Activated CD4-positive, alpha-beta T cell treated with anti-CD3 and anti-CD28 coated beads for 36 hours (primary cell): ENCODE measurements at regions of chr5 and their contacts with region 1.

Region 1: DNA sequence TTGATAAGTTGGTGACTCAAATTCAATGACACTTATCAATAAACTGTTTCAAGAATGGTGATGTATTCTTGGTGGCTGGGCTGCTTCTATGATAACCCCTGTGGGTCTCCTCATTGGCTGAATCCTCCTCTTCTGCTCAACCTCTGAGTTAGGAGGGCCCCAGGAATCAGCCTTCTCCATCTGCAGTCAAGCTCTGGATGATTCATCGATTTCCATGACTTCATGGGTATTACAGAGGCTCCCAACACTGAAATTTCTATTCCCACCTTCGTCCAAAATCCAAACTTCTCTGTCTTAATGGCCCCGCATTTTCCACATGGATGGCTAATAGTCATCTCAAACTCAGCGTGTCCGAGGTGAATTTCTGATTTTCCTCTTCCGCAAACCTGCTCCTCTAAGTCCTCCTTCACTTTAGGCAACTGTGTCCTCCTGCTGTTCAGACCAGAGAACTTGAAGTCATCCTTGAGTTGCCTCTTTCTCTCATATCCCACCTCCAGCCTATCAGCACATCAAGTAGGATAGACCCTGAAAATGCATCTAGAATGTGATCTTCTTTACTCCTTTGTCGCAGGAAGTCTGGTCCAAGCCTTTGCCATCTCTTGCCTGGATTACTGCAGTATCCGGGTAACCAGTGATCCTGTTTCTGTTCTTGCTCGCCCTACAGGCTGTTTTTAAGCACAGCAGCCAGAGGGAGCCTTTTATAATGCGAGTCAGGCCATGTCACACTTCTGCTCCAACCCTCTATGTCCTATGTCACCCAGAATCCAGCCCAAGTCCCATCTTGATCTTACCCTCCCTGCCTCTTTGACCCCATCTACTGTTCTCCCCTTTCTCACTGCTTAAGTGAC is 41.4 kb upstream of the IL7R start:
- DNase-seq: peak; percentile 72
- ATAC-seq: peak; percentile 41
- H3K4me3 Mint-ChIP-seq: no peak overlapping the region
- H3K27ac Mint-ChIP-seq: no peak overlapping the region
- H3K4me1 Mint-ChIP-seq: peaks cover 56% of the 10 kb centered on the region
- H3K27me3 Mint-ChIP-seq: no peaks in the 10 kb centered on the region

Region 2: GRCh38 chr5:35617435-35618303 is 197.6 kb before region 1 on chr5 and contains the start of gene SPEF2:
- CTCF ChIA-PET with region 1: no interaction called
- POLR2A ChIA-PET with region 1: no interaction called
- intact Hi-C with region 1: loop called in 1 of 2 experiments (anchors 5 kb)
- DNase-seq: peak; percentile 91
- ATAC-seq: peak; percentile 92
- H3K4me3 Mint-ChIP-seq: peak within 1 kb of the TSS; percentile 83
- H3K27ac Mint-ChIP-seq: peak within 1 kb of the TSS; percentile 99
- H3K4me1 Mint-ChIP-seq: peaks cover 31% of the 10 kb centered on the region
- H3K27me3 Mint-ChIP-seq: no peaks in the 10 kb centered on the region
- total RNA-seq, gene SPEF2: 14.1 to 14.6 TPM

Region 3: GRCh38 chr5:35777358-35778087 is 37.8 kb before region 1 on chr5:
- CTCF ChIA-PET with region 1: interaction called, 35 read pairs
- POLR2A ChIA-PET with region 1: no interaction called
- intact Hi-C with region 1: loop called (anchors 1 to 2 kb)
- DNase-seq: peak; percentile 86
- ATAC-seq: peak; percentile 33
- H3K4me3 Mint-ChIP-seq: peak overlapping the region; percentile 17
- H3K27ac Mint-ChIP-seq: peak overlapping the region; percentile 79
- H3K4me1 Mint-ChIP-seq: peaks cover 84% of the 10 kb centered on the region
- H3K27me3 Mint-ChIP-seq: no peaks in the 10 kb centered on the region

Region 4: DNA sequence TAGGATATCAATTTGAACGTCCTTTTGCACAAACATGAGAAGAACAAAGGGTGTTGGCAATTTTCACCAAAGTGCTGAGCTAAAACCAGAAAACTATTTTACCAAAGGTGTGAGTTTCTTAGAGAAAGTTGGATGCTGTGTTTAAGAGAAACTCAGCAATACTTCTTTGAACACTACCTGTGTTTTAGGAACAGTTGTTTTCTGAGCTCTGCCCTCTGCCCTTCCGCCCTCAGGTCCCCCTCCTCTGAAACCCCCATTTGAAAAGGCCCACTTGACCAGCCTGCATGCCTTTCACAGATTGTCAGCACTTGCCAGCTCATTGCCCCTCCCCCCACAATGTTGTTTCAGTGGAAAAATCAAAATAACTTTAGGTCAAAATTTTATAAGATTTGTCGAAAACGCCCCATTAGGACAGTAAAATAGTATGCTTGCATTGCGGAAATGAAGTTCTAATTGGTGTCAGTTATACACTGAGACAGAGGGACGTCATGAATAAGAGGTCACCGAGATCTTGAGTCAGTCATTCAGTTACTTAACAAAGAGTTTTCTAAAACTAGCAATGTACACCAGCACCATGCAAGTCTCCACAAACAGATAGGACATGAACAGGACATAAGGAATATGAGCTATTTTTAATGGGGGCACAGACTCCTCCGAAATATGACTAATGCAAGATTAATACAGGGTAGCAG is 20.5 kb before region 1 on chr5:
- CTCF ChIA-PET with region 1: interaction called, 16 read pairs
- POLR2A ChIA-PET with region 1: interaction called, 7 read pairs
- intact Hi-C with region 1: loop called (anchors 1 kb)
- DNase-seq: peak; percentile 45
- ATAC-seq: peak; percentile 40
- H3K4me3 Mint-ChIP-seq: peak overlapping the region; percentile 25
- H3K27ac Mint-ChIP-seq: peak overlapping the region; percentile 91
- H3K4me1 Mint-ChIP-seq: peaks cover 90% of the 10 kb centered on the region
- H3K27me3 Mint-ChIP-seq: no peaks in the 10 kb centered on the region

Region 5: DNA sequence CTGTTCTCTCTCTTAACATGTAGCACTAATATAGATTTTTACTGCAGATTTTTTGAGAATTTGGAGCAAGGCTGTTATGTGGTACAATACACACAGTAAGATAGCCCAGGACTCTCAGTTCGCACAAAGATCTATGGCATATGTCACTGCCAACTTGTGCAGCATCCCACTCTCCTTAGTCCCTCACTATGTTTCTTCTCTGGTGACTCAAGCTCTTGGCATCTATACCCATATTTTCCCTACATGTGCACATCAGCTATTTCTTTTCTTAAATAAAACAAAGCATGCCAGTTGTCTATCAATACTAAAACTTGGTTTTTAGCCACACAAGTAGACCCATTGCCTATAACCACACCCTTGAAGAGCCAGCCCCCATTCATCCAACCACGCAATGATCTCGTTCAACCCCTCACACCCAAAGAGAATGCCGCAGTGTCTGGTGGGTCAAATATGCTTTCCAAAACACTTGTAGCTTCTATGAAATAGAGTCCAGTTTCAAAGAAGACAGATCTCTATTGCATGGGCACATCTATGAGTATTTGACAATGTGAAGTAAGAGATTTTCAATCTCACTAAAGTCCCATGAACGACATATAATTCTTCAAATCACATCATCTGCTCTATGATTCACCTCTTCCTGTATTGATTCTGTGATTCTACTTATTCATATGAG is 23.2 kb after region 1 on chr5:
- CTCF ChIA-PET with region 1: interaction called, 9 read pairs
- POLR2A ChIA-PET with region 1: interaction called, 4 read pairs
- intact Hi-C with region 1: loop called (anchors 1 kb)
- DNase-seq: peak; percentile 69
- ATAC-seq: peak; percentile 65
- H3K4me3 Mint-ChIP-seq: peak overlapping the region; percentile 61
- H3K27ac Mint-ChIP-seq: peak overlapping the region; percentile 99
- H3K4me1 Mint-ChIP-seq: peaks cover 78% of the 10 kb centered on the region
- H3K27me3 Mint-ChIP-seq: no peaks in the 10 kb centered on the region